Mammary epithelial cell (primary cell): ENCODE measurements at regions of chr20 and their contacts with region 1.

Region 1: GRCh38 chr20:44714696-44715482 is at the start of gene CCN5:
- DNase-seq: peak; percentile 82
- H3K4me3 ChIP-seq: no peak within 1 kb of the TSS
- H3K27ac ChIP-seq: no peak within 1 kb of the TSS
- H3K4me1 ChIP-seq: peaks cover 32% of the 10 kb centered on the region
- H3K27me3 ChIP-seq: no peaks in the 10 kb centered on the region
- CTCF ChIP-seq: no peak
- total RNA-seq, gene CCN5: 0.67 TPM in 1 of 2 donors, not detected in the other

Region 2: DNA sequence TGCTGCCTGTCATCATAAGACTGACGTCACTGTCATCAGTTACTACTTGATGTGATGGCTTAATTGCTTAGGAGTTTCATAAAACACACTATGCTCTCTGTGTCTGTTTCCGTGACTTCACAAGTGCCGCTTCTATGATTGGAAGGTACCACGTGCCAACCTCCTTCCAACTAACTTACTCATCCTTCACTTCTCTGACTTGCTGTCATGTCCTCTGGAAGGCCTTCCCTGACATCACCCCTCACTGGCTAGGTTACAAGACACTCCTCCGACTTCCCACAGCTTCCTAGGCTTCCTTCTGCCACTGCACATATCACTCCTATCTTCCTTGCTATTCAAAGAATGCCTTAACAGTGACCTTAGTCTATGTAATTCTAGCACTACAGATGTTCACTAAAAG is 213.4 kb before region 1 on chr20:
- CTCF ChIA-PET with region 1: no interaction called
- dilution Hi-C with region 1: no loop called
- in situ Hi-C with region 1: no loop called
- intact Hi-C with region 1: no loop called
- DNase-seq: no peak
- H3K4me3 ChIP-seq: no peak overlapping the region
- H3K27ac ChIP-seq: no peak overlapping the region
- H3K4me1 ChIP-seq: peaks cover 14% of the 10 kb centered on the region
- H3K27me3 ChIP-seq: no peaks in the 10 kb centered on the region
- CTCF ChIP-seq: no peak

Region 3: DNA sequence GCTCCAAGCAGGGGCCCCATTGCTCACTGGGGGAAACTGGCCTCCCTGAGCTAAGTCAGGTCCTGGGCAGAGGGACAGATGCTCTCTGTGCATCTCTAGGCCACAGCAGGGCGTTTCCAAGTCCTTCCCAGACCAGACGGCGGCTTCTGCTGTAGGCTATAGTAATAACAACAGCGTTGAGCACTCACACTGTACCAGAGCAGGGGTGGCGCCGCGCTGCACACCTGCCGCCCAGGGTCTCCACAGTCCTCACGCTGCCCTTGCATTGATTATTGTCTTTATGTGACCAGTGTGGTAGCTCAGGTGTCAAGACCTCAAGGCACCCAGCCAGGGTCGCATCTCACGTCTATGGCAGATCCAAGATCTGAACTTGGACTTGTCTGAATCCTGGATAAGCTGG is 14.6 kb before region 1 on chr20:
- CTCF ChIA-PET with region 1: interaction called, 10 read pairs
- dilution Hi-C with region 1: no loop called
- in situ Hi-C with region 1: no loop called
- intact Hi-C with region 1: no loop called
- DNase-seq: no peak
- H3K4me3 ChIP-seq: no peak overlapping the region
- H3K27ac ChIP-seq: no peak overlapping the region
- H3K4me1 ChIP-seq: no peaks in the 10 kb centered on the region
- H3K27me3 ChIP-seq: no peaks in the 10 kb centered on the region
- CTCF ChIP-seq: no peak